Transverse colon (tissue), 4 donors: ENCODE measurements at regions of chr2 and their contacts with region 1.

Region 1: GRCh38 chr2:16608661-16609643 is 56.7 kb downstream of the CYRIA start:
- DNase-seq: peak; percentile 84
- H3K4me3 ChIP-seq: peak overlapping the region in 3 of 4 donors; percentile 24 to 48 (median 34)
- H3K27ac ChIP-seq: peak overlapping the region in 3 of 4 donors; percentile 23 to 48 (median 41)
- H3K4me1 ChIP-seq: peaks cover 0 to 15% (median 3%) of the 10 kb centered on the region in 4 donors
- H3K27me3 ChIP-seq: no peaks in the 10 kb centered on the region
- CTCF ChIP-seq: peak; percentile 78 to 97 (median 93)
- EP300 ChIP-seq: no peak
- POLR2A ChIP-seq: no peak

Region 2: GRCh38 chr2:16394072-16394985 is 214.6 kb before region 1 on chr2:
- in situ Hi-C with region 1: no loop called
- intact Hi-C with region 1: no loop called
- DNase-seq: no peak
- H3K4me3 ChIP-seq: no peak overlapping the region
- H3K27ac ChIP-seq: no peak overlapping the region
- H3K4me1 ChIP-seq: no peaks in the 10 kb centered on the region
- H3K27me3 ChIP-seq: no peaks in the 10 kb centered on the region
- CTCF ChIP-seq: no peak
- EP300 ChIP-seq: no peak
- POLR2A ChIP-seq: no peak

Region 3: DNA sequence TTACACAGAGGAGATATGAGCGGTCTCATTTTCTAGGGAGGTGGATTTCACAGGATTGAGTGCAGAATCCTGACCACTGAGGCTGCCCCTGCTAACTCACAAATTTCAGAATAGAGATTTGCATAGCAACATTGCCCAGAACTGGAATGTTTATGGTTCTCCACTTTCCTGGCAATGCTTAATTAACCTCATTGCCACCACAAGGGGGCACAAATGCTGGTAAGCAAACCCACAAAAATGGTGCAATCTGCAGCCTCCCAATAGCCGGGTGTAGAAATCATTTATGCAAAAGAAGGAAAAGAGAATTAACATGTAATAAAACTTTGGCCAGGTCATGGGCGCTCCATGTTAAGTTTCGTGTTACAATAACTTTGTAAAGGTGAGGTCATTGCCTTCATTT is 55.7 kb before region 1 on chr2:
- in situ Hi-C with region 1: no loop called
- intact Hi-C with region 1: loop called (anchors 1 kb)
- DNase-seq: peak; percentile 12
- H3K4me3 ChIP-seq: no peak overlapping the region
- H3K27ac ChIP-seq: no peak overlapping the region
- H3K4me1 ChIP-seq: no peaks in the 10 kb centered on the region
- H3K27me3 ChIP-seq: no peaks in the 10 kb centered on the region
- CTCF ChIP-seq: peak; percentile 35 to 52 (median 40)
- EP300 ChIP-seq: no peak
- POLR2A ChIP-seq: no peak

Region 4: GRCh38 chr2:16745466-16745865 is 136.5 kb after region 1 on chr2:
- in situ Hi-C with region 1: loop called in 2 of 4 experiments (anchors 5 to 10 kb)
- intact Hi-C with region 1: no loop called
- DNase-seq: no peak
- H3K4me3 ChIP-seq: no peak overlapping the region
- H3K27ac ChIP-seq: no peak overlapping the region
- H3K4me1 ChIP-seq: no peaks in the 10 kb centered on the region
- H3K27me3 ChIP-seq: no peaks in the 10 kb centered on the region
- CTCF ChIP-seq: no peak
- EP300 ChIP-seq: no peak
- POLR2A ChIP-seq: no peak

Region 5: DNA sequence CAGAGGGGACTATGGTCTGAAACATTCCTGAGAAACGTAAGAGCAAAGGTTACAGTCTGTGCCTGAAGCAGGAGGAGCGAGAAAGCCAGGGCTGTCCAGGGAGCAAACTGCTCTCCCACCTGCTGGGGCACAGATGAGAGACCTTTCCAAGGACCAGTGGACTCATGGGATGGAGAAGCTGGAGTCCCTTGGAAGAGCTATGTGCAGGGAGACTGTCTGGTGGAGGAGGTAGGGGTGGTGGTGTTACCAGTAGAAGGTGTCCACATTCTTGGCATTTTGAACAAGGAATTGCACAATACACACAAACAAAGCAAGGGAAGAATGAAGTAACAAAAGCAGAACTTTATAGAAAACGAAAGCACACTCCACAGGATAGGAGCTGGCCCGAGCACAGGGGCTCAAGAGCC is 154.5 kb after region 1 on chr2:
- in situ Hi-C with region 1: loop called in 2 of 4 experiments (anchors 10 kb)
- intact Hi-C with region 1: no loop called
- DNase-seq: no peak
- H3K4me3 ChIP-seq: no peak overlapping the region
- H3K27ac ChIP-seq: no peak overlapping the region
- H3K4me1 ChIP-seq: no peaks in the 10 kb centered on the region
- H3K27me3 ChIP-seq: no peaks in the 10 kb centered on the region
- CTCF ChIP-seq: no peak
- EP300 ChIP-seq: no peak
- POLR2A ChIP-seq: no peak